Left ventricle myocardium superior (tissue), 1 donor: ENCODE measurements at regions of chr11 and their contacts with region 1.

Region 1: GRCh38 chr11:5380740-5381342 is 2.8 kb upstream of the OR51M1 start:
- DNase-seq: peak; percentile 28
- ATAC-seq: peak; percentile 77

Region 2: GRCh38 chr11:5123802-5124521 is 256.9 kb before region 1 on chr11:
- intact Hi-C with region 1: loop called (anchors 5 kb)
- DNase-seq: peak; percentile 37
- ATAC-seq: peak; percentile 57

Region 3: GRCh38 chr11:5550440-5551095 is 169.7 kb after region 1 on chr11:
- intact Hi-C with region 1: no loop called
- DNase-seq: no peak
- ATAC-seq: no peak